CD8-positive, alpha-beta T cell (primary cell): ENCODE measurements at regions of chr12 and their contacts with region 1.

Region 1: DNA sequence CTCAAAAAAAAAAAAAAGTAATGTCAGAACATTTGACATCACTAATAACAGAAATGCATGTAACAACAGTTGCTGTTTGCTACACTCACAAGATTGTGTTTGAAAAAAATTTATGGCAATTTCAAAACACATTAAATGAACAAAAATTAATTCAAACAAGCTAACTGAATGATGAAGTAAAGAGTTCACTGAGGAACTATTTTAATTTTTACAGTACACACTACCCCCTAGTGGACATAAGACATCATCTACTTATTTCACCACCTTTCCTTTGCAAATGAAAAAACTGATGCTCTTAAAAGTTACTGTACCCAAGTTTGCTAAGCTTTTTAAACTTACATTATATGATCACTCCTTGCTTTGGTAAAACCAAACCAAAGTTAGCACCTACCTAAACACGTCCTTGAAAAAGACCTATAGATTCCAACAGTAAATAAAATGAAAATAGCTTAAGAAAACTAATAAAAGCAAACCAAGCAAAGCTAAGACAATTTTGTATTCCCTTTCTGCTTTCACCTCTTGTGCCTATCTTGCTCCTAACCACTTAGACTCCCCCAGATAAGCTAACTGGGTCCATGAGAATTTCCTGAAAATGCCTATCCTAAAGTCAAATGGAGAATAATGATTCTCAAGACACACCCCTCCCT is 22.2 kb downstream of the UBE2N start:
- DNase-seq: peak in 2 of 9 experiments; percentile 60 to 73
- ATAC-seq: peak; percentile 78
- H3K4me3 ChIP-seq: no peak overlapping the region
- H3K4me3 Mint-ChIP-seq: no peak overlapping the region
- H3K27ac ChIP-seq: peak overlapping the region in 1 of 2 experiments; percentile 19
- H3K27ac Mint-ChIP-seq: peak overlapping the region; percentile 38
- H3K4me1 ChIP-seq: peaks cover 40% of the 10 kb centered on the region
- H3K4me1 Mint-ChIP-seq: peaks cover 87% of the 10 kb centered on the region
- H3K27me3 ChIP-seq: no peaks in the 10 kb centered on the region
- H3K27me3 Mint-ChIP-seq: no peaks in the 10 kb centered on the region
- CTCF ChIP-seq: peak; percentile 69

Region 2: GRCh38 chr12:92784795-92785562 is 634.5 kb before region 1 on chr12:
- CTCF ChIA-PET with region 1: interaction called, 24 read pairs
- POLR2A ChIA-PET with region 1: no interaction called
- intact Hi-C with region 1: loop called (anchors 1 to 2 kb)
- DNase-seq: peak in 3 of 9 experiments; percentile 28 to 77 (median 68)
- ATAC-seq: peak; percentile 99
- H3K4me3 ChIP-seq: no peak overlapping the region
- H3K4me3 Mint-ChIP-seq: no peak overlapping the region
- H3K27ac ChIP-seq: no peak overlapping the region
- H3K27ac Mint-ChIP-seq: no peak overlapping the region
- H3K4me1 ChIP-seq: no peaks in the 10 kb centered on the region
- H3K4me1 Mint-ChIP-seq: peaks cover 11% of the 10 kb centered on the region
- H3K27me3 ChIP-seq: no peaks in the 10 kb centered on the region
- H3K27me3 Mint-ChIP-seq: no peaks in the 10 kb centered on the region
- CTCF ChIP-seq: peak; percentile 61

Region 3: GRCh38 chr12:93098077-93098476 is 321.4 kb before region 1 on chr12:
- CTCF ChIA-PET with region 1: interaction called, 6 read pairs
- POLR2A ChIA-PET with region 1: no interaction called
- intact Hi-C with region 1: loop called (anchors 2 to 5 kb)
- DNase-seq: peak; percentile 41 to 79 (median 69)
- ATAC-seq: peak; percentile 83
- H3K4me3 ChIP-seq: no peak overlapping the region
- H3K4me3 Mint-ChIP-seq: no peak overlapping the region
- H3K27ac ChIP-seq: no peak overlapping the region
- H3K27ac Mint-ChIP-seq: no peak overlapping the region
- H3K4me1 ChIP-seq: no peaks in the 10 kb centered on the region
- H3K4me1 Mint-ChIP-seq: peaks cover 9% of the 10 kb centered on the region
- H3K27me3 ChIP-seq: no peaks in the 10 kb centered on the region
- H3K27me3 Mint-ChIP-seq: no peaks in the 10 kb centered on the region
- CTCF ChIP-seq: peak; percentile 65

Region 4: GRCh38 chr12:93256256-93256969 is 163.1 kb before region 1 on chr12:
- CTCF ChIA-PET with region 1: no interaction called
- POLR2A ChIA-PET with region 1: no interaction called
- intact Hi-C with region 1: no loop called
- DNase-seq: no peak
- ATAC-seq: no peak
- H3K4me3 ChIP-seq: no peak overlapping the region
- H3K4me3 Mint-ChIP-seq: no peak overlapping the region
- H3K27ac ChIP-seq: no peak overlapping the region
- H3K27ac Mint-ChIP-seq: no peak overlapping the region
- H3K4me1 ChIP-seq: no peaks in the 10 kb centered on the region
- H3K4me1 Mint-ChIP-seq: no peaks in the 10 kb centered on the region
- H3K27me3 ChIP-seq: no peaks in the 10 kb centered on the region
- H3K27me3 Mint-ChIP-seq: no peaks in the 10 kb centered on the region
- CTCF ChIP-seq: no peak

Region 5: GRCh38 chr12:93397412-93397811 is 22.1 kb before region 1 on chr12:
- CTCF ChIA-PET with region 1: interaction called, 24 read pairs
- POLR2A ChIA-PET with region 1: no interaction called
- intact Hi-C with region 1: no loop called
- DNase-seq: no peak
- ATAC-seq: no peak
- H3K4me3 ChIP-seq: no peak overlapping the region
- H3K4me3 Mint-ChIP-seq: no peak overlapping the region
- H3K27ac ChIP-seq: no peak overlapping the region
- H3K27ac Mint-ChIP-seq: no peak overlapping the region
- H3K4me1 ChIP-seq: no peaks in the 10 kb centered on the region
- H3K4me1 Mint-ChIP-seq: peaks cover 4% of the 10 kb centered on the region
- H3K27me3 ChIP-seq: no peaks in the 10 kb centered on the region
- H3K27me3 Mint-ChIP-seq: no peaks in the 10 kb centered on the region
- CTCF ChIP-seq: no peak

Region 6: DNA sequence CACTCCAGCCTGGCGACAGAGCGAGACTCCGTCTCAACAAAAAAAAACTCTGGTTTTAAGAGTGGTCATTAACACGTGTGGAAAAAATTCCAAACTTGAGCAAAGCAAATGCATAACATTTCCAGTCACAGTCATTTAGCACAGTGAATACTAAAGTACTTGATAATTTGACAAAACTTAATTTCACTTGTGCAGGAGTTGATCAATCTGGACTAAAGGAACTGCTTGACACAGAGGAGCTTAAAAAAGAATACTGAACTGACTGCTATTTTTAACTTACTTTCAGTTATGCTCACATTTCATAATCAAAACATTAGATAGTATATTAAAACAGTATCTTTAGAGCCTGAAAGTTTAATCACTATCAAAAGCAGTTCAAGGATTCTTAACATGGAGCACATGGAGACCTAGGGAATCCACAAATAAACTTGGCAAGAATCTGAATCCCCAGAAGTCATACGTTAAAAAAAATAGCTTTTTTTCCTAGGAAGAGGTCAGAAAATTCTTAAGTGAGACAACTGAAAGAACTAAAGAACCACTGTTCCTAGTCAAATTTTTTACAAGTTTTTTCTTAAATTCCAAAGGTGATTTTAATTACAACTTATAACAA is 14.8 kb after region 1 on chr12:
- CTCF ChIA-PET with region 1: interaction called, 25 read pairs
- POLR2A ChIA-PET with region 1: no interaction called
- intact Hi-C with region 1: loop called in 1 of 2 experiments (anchors 1 kb)
- DNase-seq: no peak
- ATAC-seq: no peak
- H3K4me3 ChIP-seq: no peak overlapping the region
- H3K4me3 Mint-ChIP-seq: no peak overlapping the region
- H3K27ac ChIP-seq: no peak overlapping the region
- H3K27ac Mint-ChIP-seq: no peak overlapping the region
- H3K4me1 ChIP-seq: peaks cover 63% of the 10 kb centered on the region
- H3K4me1 Mint-ChIP-seq: peaks cover 80% of the 10 kb centered on the region
- H3K27me3 ChIP-seq: no peaks in the 10 kb centered on the region
- H3K27me3 Mint-ChIP-seq: no peaks in the 10 kb centered on the region
- CTCF ChIP-seq: no peak

Region 7: GRCh38 chr12:93441617-93442410 is 22.3 kb after region 1 on chr12 and contains the start of gene UBE2N:
- CTCF ChIA-PET with region 1: interaction called, 20 read pairs
- POLR2A ChIA-PET with region 1: interaction called, 4 read pairs
- intact Hi-C with region 1: no loop called
- DNase-seq: peak; percentile 92 to 97 (median 96)
- ATAC-seq: peak; percentile 83
- H3K4me3 ChIP-seq: peak within 1 kb of the TSS; percentile 78
- H3K4me3 Mint-ChIP-seq: peak within 1 kb of the TSS; percentile 97
- H3K27ac ChIP-seq: peak within 1 kb of the TSS; percentile 87 to 90
- H3K27ac Mint-ChIP-seq: peak within 1 kb of the TSS; percentile 96
- H3K4me1 ChIP-seq: peaks cover 47% of the 10 kb centered on the region
- H3K4me1 Mint-ChIP-seq: peaks cover 48% of the 10 kb centered on the region
- H3K27me3 ChIP-seq: no peaks in the 10 kb centered on the region
- H3K27me3 Mint-ChIP-seq: no peaks in the 10 kb centered on the region
- CTCF ChIP-seq: no peak
- total RNA-seq, gene UBE2N: 89.5 to 93.6 TPM